Left cardiac atrium (tissue), 4 donors: ENCODE measurements at regions of chr11 and their contacts with region 1.

Region 1: GRCh38 chr11:130522284-130522961 is 74.0 kb downstream of the ADAMTS15 start:
- DNase-seq: peak; percentile 95
- ATAC-seq: peak; percentile 95

Region 2: GRCh38 chr11:130454491-130455252 is 67.8 kb before region 1 on chr11:
- intact Hi-C with region 1: loop called in 1 of 2 experiments (anchors 2 kb)
- DNase-seq: no peak
- ATAC-seq: peak; percentile 20 to 24

Region 3: GRCh38 chr11:130653838-130654636 is 131.6 kb after region 1 on chr11:
- intact Hi-C with region 1: loop called in 1 of 2 experiments (anchors 2 kb)
- DNase-seq: peak; percentile 87
- ATAC-seq: peak; percentile 95 to 96